ENCODE measurements at regions of chr1 and their contacts with region 1.

Region 1: DNA sequence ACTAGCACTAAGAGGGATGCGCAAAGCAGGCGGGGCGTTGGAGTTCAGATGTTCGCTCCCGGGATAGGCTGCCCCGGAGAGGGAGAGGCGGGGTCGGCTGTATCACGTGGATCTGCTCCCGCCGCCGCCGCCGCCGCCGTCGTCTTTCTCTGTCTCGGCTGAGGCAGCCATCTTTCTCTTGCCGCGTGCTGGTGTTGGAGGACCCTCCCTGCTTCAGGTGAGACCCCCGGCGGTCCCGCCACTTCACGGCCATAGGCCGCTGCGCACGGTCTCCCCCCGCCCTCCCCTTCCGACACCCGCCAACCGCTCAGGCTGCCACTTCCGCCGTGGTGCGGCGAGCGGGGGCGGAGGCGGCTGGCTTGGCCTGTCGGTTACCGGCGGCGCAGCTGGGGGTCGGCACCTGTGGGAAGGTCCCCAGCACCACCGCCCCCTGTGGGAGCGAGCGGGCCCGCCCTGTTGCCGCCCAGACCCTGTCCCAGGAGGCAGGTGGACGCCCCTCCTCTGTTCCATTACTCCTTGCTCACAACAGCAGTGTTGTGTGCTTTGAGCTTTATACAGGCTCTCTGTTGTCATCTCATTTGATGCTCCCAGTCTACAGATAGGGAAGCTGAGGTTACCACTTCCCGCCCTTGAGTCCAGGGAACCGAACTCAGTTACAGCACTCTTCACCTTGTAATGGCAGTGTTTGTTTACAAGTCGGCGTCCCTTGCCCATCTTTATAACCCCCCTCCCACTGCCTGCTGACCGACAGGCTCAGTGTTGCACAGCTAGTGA is at the start of gene BTF3L4:
- DNase-seq: peak; percentile 66
- ATAC-seq: peak; percentile 94
- H3K4me3 ChIP-seq: peak within 1 kb of the TSS; percentile 85
- H3K27ac ChIP-seq: peak within 1 kb of the TSS; percentile 92
- H3K4me1 ChIP-seq: peaks cover 4% of the 10 kb centered on the region; the same call in 1 of the 2 replicates
- H3K27me3 ChIP-seq: no peaks in the 10 kb centered on the region
- CTCF ChIP-seq: no peak
- EP300 ChIP-seq: peak in 1 of 2 experiments; percentile 63; a peak in 1 of 4 replicates
- POLR2A ChIP-seq: peak; percentile 74
- RAD21 ChIP-seq: no peak
- polyA plus RNA-seq, gene BTF3L4: 61.1 to 72.7 TPM

Region 2: DNA sequence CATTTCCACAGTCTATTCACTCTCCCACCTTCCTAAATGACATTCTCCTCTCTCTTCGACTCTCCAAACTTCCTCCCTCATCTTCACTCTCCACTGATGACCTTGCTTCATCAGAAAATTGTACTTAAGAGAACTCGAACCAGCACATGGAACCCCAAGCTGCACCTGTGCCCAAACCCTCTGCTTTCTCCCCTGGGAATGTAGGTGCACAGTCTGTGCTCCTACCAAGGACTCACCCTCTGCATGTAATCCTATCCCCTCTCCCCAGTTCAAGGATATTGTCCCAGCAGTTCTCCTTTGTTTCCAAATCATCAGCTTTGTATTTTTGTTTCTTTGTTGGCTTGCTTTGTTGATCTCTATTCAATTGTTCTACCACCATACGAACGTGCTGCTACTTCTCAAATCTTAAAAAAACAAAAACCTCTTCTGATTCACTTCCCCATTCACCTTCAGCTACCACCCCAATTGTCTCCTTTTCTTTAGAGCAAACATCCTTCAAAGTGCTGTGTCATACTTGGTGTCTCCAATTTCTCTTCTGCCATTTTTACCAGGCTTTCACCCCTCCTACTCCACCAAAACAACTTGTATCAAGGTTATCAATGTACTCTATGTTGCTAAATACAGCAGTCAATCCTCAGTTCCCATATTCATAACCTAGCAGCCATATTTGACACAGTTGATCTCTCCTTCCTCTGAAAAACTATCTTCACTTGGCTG is 92.6 kb before region 1 on chr1:
- CTCF ChIA-PET with region 1: no interaction called
- POLR2A ChIA-PET with region 1: no interaction called
- RAD21 ChIA-PET with region 1: no interaction called
- SMC1A ChIA-PET with region 1: no interaction called
- in situ Hi-C with region 1: no loop called
- intact Hi-C with region 1: no loop called
- DNase-seq: no peak
- ATAC-seq: no peak; the same call in 2 of the 3 replicates
- H3K4me3 ChIP-seq: no peak overlapping the region
- H3K27ac ChIP-seq: peak overlapping the region; percentile 4; the same call in 1 of the 2 replicates
- H3K4me1 ChIP-seq: peaks cover 29% of the 10 kb centered on the region
- H3K27me3 ChIP-seq: no peaks in the 10 kb centered on the region
- CTCF ChIP-seq: no peak
- EP300 ChIP-seq: no peak
- POLR2A ChIP-seq: no peak
- RAD21 ChIP-seq: no peak

Region 3: DNA sequence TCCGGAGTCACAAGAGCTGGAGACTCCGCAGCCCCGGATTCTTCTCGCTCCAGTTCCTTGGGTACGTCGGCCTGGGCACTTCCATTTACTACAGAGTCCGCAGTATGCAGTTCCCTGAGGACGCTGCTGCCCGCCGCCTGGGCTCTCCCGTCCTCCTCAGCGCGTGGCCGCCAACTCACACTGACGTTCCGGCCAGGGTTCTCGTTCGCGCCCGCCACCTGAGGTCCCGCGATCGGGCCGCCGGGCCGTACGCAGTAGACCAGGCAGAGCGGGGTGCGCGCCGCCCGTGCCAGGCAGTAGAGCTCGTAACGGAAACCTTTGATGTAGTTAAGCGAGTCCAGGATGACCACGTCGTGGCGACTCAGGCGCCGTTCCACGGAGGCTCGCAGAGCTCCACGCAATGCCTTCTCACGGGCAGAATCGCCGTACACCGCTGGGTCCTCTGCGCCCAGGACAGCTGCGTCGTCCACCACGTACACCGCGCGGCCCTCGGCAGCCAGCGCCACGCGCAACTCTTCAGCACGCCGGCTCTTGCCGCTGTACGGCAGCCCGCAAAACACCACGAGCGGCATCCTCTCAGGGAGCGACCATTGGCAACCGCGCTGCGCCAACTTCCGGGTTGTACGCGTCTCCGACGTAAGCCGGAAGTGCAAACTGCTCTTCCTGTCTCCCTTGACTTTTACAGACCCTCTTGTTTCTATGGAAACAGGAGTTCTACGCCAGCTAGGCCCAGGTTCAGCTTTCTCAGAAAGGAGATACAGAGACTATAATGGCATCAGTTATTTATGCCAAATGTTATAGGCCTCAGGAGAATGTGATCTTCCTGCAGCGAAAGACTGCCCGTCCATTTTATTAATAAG is 22.9 kb before region 1 on chr1 and contains the start of gene KTI12:
- CTCF ChIA-PET with region 1: interaction called, 10 read pairs
- POLR2A ChIA-PET with region 1: interaction called, 37 read pairs
- RAD21 ChIA-PET with region 1: interaction called, 4 read pairs
- SMC1A ChIA-PET with region 1: interaction called, 13 read pairs
- in situ Hi-C with region 1: no loop called
- intact Hi-C with region 1: loop called (anchors 1 kb)
- DNase-seq: peak; percentile 60
- ATAC-seq: peak; percentile 90
- H3K4me3 ChIP-seq: peak within 1 kb of the TSS; percentile 78
- H3K27ac ChIP-seq: peak within 1 kb of the TSS; percentile 83
- H3K4me1 ChIP-seq: peaks cover 12% of the 10 kb centered on the region
- H3K27me3 ChIP-seq: no peaks in the 10 kb centered on the region
- CTCF ChIP-seq: no peak
- EP300 ChIP-seq: no peak
- POLR2A ChIP-seq: peak; percentile 98
- RAD21 ChIP-seq: no peak
- polyA plus RNA-seq, gene KTI12: 2.7 to 6.7 TPM

Region 4: GRCh38 chr1:52072291-52072690 is 15.9 kb after region 1 on chr1:
- CTCF ChIA-PET with region 1: interaction called, 5 read pairs
- POLR2A ChIA-PET with region 1: interaction called, 9 read pairs
- RAD21 ChIA-PET with region 1: no interaction called
- SMC1A ChIA-PET with region 1: interaction called, 18 read pairs
- in situ Hi-C with region 1: no loop called
- intact Hi-C with region 1: no loop called
- DNase-seq: no peak
- ATAC-seq: no peak
- H3K4me3 ChIP-seq: no peak overlapping the region
- H3K27ac ChIP-seq: no peak overlapping the region
- H3K4me1 ChIP-seq: no peaks in the 10 kb centered on the region
- H3K27me3 ChIP-seq: no peaks in the 10 kb centered on the region
- CTCF ChIP-seq: no peak
- EP300 ChIP-seq: no peak
- POLR2A ChIP-seq: no peak
- RAD21 ChIP-seq: no peak

Region 5: DNA sequence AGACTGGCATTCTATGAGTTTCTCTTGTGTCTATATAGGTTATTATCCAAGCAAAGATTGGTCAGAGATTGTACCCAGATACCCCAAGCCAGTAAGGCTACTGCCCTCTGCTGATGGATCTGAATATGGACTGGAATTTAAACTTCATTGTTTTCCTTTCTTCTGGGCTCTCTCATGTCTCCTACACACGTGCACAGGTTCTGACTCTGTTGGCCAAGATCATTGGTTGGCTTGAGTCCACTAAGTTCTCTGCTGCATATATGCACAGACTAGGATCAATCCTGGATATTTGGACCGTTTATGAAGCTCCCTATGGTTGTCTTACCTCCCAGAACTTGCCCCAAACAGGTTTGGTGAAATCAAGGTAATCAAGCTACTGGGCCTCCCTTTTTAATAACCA is 240.0 kb after region 1 on chr1:
- CTCF ChIA-PET with region 1: interaction called, 13 read pairs
- POLR2A ChIA-PET with region 1: no interaction called
- RAD21 ChIA-PET with region 1: no interaction called
- SMC1A ChIA-PET with region 1: no interaction called
- in situ Hi-C with region 1: no loop called
- intact Hi-C with region 1: no loop called
- DNase-seq: peak; percentile 7
- ATAC-seq: peak; percentile 86
- H3K4me3 ChIP-seq: no peak overlapping the region
- H3K27ac ChIP-seq: no peak overlapping the region
- H3K4me1 ChIP-seq: no peaks in the 10 kb centered on the region
- H3K27me3 ChIP-seq: no peaks in the 10 kb centered on the region
- CTCF ChIP-seq: peak; percentile 67 to 77 (median 68)
- EP300 ChIP-seq: no peak
- POLR2A ChIP-seq: no peak
- RAD21 ChIP-seq: peak; percentile 94